PC-9 (cell line): ENCODE measurements at regions of chr5 and their contacts with region 1.

Region 1: GRCh38 chr5:1130218-1130946 is 18.5 kb upstream of the SLC12A7 start:
- DNase-seq: peak; percentile 97 to 99
- H3K4me3 ChIP-seq: peak overlapping the region; percentile 45; the same call in 1 of the 2 replicates
- H3K27ac ChIP-seq: peak overlapping the region; percentile 82
- H3K4me1 ChIP-seq: peaks cover 57% of the 10 kb centered on the region
- H3K27me3 ChIP-seq: no peaks in the 10 kb centered on the region
- CTCF ChIP-seq: peak; percentile 27; the same call in 1 of the 2 replicates

Region 2: DNA sequence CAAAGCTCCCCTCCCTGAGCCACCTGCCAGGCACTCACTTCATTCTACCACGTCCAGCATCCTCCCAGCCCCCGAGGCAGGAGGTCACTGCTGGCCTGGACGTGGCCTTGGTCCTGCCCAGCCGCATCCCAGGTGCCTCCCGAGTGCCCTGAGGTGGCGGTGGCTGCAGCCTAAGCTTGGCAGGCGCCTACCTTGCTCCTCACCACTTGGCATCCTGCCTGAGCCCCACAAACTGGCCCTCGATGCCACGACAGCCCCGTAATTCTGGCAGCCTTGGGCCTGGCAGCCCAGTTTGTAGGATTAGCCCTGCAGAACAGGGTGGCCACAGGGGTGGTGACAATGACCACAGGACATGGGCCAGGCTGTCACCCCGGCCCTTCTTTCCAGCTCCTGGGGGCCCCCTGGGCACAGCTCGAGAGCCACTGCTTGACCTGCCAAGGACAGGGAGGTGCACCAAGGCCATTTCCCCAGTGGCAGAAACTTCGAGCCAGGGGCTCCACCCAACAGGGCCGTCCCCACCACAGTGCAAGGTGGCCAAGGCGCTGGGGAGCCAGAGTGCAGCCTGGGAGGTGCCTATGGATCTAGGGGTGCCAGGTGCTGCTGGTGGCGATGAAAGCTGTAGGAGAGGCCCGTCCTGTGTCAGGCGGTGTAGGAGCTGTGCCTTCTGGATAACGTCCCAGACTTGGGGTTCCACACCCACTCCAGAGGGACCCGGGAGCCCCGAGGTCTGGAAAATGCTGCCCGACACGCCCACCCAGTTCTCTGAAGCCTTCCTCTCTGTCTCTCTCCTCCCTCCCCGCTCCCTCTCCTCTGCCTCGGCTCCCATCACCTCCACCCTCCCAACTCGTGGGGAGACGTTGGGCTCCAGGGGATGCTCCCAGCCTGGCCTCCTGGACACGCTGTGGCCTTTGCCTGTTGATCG is 103.4 kb before region 1 on chr5:
- CTCF ChIA-PET with region 1: no interaction called
- POLR2A ChIA-PET with region 1: no interaction called
- intact Hi-C with region 1: no loop called
- DNase-seq: peak in 1 of 2 experiments; percentile 4
- H3K4me3 ChIP-seq: no peak overlapping the region
- H3K27ac ChIP-seq: no peak overlapping the region
- H3K4me1 ChIP-seq: no peaks in the 10 kb centered on the region
- H3K27me3 ChIP-seq: peaks cover 56% of the 10 kb centered on the region
- CTCF ChIP-seq: no peak

Region 3: GRCh38 chr5:1037123-1037670 is 93.2 kb before region 1 on chr5:
- CTCF ChIA-PET with region 1: no interaction called
- POLR2A ChIA-PET with region 1: no interaction called
- intact Hi-C with region 1: no loop called
- DNase-seq: no peak
- H3K4me3 ChIP-seq: no peak overlapping the region
- H3K27ac ChIP-seq: no peak overlapping the region
- H3K4me1 ChIP-seq: no peaks in the 10 kb centered on the region
- H3K27me3 ChIP-seq: peaks cover 77% of the 10 kb centered on the region
- CTCF ChIP-seq: no peak

Region 4: GRCh38 chr5:1118231-1118698 is 12.1 kb before region 1 on chr5:
- CTCF ChIA-PET with region 1: interaction called, 16 read pairs
- POLR2A ChIA-PET with region 1: interaction called, 77 read pairs
- intact Hi-C with region 1: loop called (anchors 1 kb)
- DNase-seq: peak; percentile 58 to 79
- H3K4me3 ChIP-seq: no peak overlapping the region
- H3K27ac ChIP-seq: no peak overlapping the region
- H3K4me1 ChIP-seq: peaks cover 35% of the 10 kb centered on the region
- H3K27me3 ChIP-seq: no peaks in the 10 kb centered on the region
- CTCF ChIP-seq: no peak

Region 5: GRCh38 chr5:1155191-1156032 is 25.0 kb after region 1 on chr5:
- CTCF ChIA-PET with region 1: no interaction called
- POLR2A ChIA-PET with region 1: no interaction called
- intact Hi-C with region 1: no loop called
- DNase-seq: no peak
- H3K4me3 ChIP-seq: no peak overlapping the region
- H3K27ac ChIP-seq: no peak overlapping the region
- H3K4me1 ChIP-seq: peaks cover 8% of the 10 kb centered on the region; the same call in 1 of the 2 replicates
- H3K27me3 ChIP-seq: peaks cover 39% of the 10 kb centered on the region
- CTCF ChIP-seq: no peak